ENCODE measurements at regions of chr15 and their contacts with region 1.

Region 1: DNA sequence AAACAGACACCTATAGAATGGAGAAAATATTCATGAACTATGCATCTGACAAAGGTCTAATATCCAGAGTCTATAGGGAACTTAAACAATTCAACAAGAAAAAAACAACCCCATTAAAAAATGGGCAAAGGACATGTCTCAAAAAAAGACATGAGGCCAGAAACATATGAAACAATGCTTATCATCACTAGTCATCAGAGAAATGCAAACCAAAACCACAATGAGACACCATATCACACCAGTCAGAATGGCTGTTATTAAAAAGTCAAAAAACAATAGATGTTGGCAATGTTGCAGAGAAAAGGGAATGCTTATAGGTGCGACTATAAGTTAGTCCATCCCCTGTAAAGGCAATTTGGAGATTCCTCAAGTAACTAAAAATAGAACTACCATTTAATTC is 11.4 kb upstream of the HDGFL3 start:
- DNase-seq: no peak
- ATAC-seq: no peak
- H3K4me3 ChIP-seq: no peak overlapping the region
- H3K4me3 Mint-ChIP-seq: no peak overlapping the region
- H3K27ac ChIP-seq: no peak overlapping the region
- H3K27ac Mint-ChIP-seq: no peak overlapping the region
- H3K4me1 ChIP-seq: no peaks in the 10 kb centered on the region
- H3K4me1 Mint-ChIP-seq: no peaks in the 10 kb centered on the region
- H3K27me3 ChIP-seq: no peaks in the 10 kb centered on the region
- H3K27me3 Mint-ChIP-seq: peaks cover 17% of the 10 kb centered on the region
- CTCF ChIP-seq: no peak

Region 2: DNA sequence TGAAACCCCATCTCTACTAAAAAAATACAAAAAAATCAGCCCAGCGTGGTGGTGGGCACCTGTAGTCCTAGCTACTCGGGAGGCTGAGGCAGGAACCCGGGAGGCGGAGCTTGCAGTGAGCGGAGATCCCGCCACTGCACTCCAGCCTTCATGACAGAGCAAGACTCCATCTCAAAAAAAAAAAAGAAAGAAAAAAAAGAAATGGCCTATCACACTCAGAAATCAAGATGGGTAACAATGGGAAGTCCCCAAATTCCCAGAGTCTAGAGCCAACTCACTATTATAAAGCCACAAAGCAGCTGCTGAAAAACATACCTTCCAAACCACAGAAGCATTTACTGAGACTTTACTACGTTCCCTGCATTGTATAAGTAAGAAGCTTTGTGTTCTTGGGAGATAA is 18.9 kb before region 1 on chr15:
- CTCF ChIA-PET with region 1: no interaction called
- POLR2A ChIA-PET with region 1: no interaction called
- intact Hi-C with region 1: loop called in 1 of 2 experiments (anchors 1 kb)
- DNase-seq: peak in 2 of 9 experiments; percentile 25 to 58
- ATAC-seq: peak; percentile 57
- H3K4me3 ChIP-seq: no peak overlapping the region
- H3K4me3 Mint-ChIP-seq: no peak overlapping the region
- H3K27ac ChIP-seq: no peak overlapping the region
- H3K27ac Mint-ChIP-seq: no peak overlapping the region
- H3K4me1 ChIP-seq: no peaks in the 10 kb centered on the region
- H3K4me1 Mint-ChIP-seq: peaks cover 30% of the 10 kb centered on the region
- H3K27me3 ChIP-seq: no peaks in the 10 kb centered on the region
- H3K27me3 Mint-ChIP-seq: no peaks in the 10 kb centered on the region
- CTCF ChIP-seq: no peak

Measured in CD8-positive, alpha-beta T cell (primary cell).